T-cell (primary cell): ENCODE measurements at regions of chr6 and their contacts with region 1.

Region 1: GRCh38 chr6:27893059-27893835 is 18.9 kb downstream of the OR2B2 start:
- DNase-seq: peak; percentile 71 to 93 (median 86)
- ATAC-seq: peak; percentile 72 to 79 (median 76)
- H3K4me3 ChIP-seq: peak overlapping the region; percentile 71 to 76
- H3K4me3 Mint-ChIP-seq: no peak overlapping the region
- H3K27ac ChIP-seq: peak overlapping the region; percentile 89
- H3K27ac Mint-ChIP-seq: no peak overlapping the region
- H3K4me1 ChIP-seq: peaks cover 19 to 40% of the 10 kb centered on the region in 2 experiments
- H3K4me1 Mint-ChIP-seq: peaks cover 28 to 36% (median 29%) of the 10 kb centered on the region in 3 donors
- H3K27me3 ChIP-seq: no peaks in the 10 kb centered on the region
- H3K27me3 Mint-ChIP-seq: no peaks in the 10 kb centered on the region

Region 2: GRCh38 chr6:26553635-26554446 is 1339.4 kb before region 1 on chr6:
- CTCF ChIA-PET with region 1: no interaction called
- POLR2A ChIA-PET with region 1: interaction called in 1 of 2 experiments, 13 read pairs
- DNase-seq: peak in 34 of 35 experiments; percentile 32 to 89 (median 62)
- ATAC-seq: peak; percentile 32 to 56 (median 50)
- H3K4me3 ChIP-seq: peak overlapping the region; percentile 62 to 79
- H3K4me3 Mint-ChIP-seq: no peak overlapping the region
- H3K27ac ChIP-seq: peak overlapping the region; percentile 47
- H3K27ac Mint-ChIP-seq: no peak overlapping the region
- H3K4me1 ChIP-seq: peaks cover 23 to 27% of the 10 kb centered on the region in 2 experiments
- H3K4me1 Mint-ChIP-seq: peaks cover 18 to 24% (median 22%) of the 10 kb centered on the region in 3 donors
- H3K27me3 ChIP-seq: no peaks in the 10 kb centered on the region
- H3K27me3 Mint-ChIP-seq: peaks cover 0 to 1% of the 10 kb centered on the region in 2 donors

Region 3: DNA sequence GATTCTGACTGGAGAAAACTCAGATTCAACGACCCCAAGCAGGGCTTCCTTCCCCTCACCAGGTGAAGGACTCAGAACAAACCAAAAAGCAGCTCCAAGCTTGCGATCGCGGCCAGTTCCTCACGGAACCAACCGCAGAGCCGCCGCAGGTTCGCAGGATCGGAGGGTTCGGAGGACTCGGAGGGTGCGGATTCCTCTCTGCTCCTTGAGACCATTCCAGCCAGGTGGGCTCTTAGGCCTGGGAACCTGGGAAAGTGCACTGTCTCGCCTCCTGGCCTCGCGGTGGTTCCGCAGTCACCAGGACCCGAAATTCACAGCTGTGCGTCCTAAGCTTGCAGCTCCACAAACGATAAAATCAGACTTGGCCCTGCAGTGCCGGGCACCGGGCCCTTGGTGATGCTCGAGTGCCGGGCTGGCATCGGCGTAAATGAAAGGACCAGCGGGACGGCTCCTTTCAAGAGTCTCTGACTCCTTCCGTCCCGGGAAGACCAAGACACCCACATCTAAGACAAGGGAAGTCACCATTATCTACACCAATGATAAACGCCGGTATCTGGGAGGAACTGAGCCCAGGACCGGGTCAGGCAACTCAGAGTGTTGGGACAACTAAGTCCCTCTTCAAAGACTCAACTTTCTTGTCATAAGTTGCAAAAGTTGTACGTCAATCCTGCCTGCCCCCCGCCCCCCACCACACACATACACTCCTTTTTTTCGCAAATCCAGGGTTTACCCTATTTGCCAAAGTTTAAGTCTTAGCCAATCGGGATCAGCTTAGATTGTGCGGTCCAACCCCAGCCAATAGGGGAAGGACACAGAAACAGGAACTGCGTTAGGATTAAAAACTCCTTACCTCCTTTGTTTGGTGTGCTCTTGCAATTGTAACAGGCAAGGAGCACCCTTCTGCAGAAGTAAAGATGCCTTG is 715.5 kb before region 1 on chr6:
- CTCF ChIA-PET with region 1: interaction called, 3 to 8 read pairs
- POLR2A ChIA-PET with region 1: interaction called in 1 of 2 experiments, 12 read pairs
- DNase-seq: peak; percentile 35 to 83 (median 58)
- ATAC-seq: peak; percentile 68 to 88 (median 76)
- H3K4me3 ChIP-seq: peak overlapping the region; percentile 77 to 100
- H3K4me3 Mint-ChIP-seq: peak overlapping the region; percentile 92 to 96 (median 96)
- H3K27ac ChIP-seq: peak overlapping the region; percentile 55
- H3K27ac Mint-ChIP-seq: peak overlapping the region; percentile 88 to 91
- H3K4me1 ChIP-seq: peaks cover 2 to 16% of the 10 kb centered on the region in 2 experiments
- H3K4me1 Mint-ChIP-seq: peaks cover 7 to 22% (median 15%) of the 10 kb centered on the region in 3 donors
- H3K27me3 ChIP-seq: peaks cover 0 to 3% of the 10 kb centered on the region in 2 experiments
- H3K27me3 Mint-ChIP-seq: peaks cover 4 to 5% of the 10 kb centered on the region in 2 donors

Region 4: DNA sequence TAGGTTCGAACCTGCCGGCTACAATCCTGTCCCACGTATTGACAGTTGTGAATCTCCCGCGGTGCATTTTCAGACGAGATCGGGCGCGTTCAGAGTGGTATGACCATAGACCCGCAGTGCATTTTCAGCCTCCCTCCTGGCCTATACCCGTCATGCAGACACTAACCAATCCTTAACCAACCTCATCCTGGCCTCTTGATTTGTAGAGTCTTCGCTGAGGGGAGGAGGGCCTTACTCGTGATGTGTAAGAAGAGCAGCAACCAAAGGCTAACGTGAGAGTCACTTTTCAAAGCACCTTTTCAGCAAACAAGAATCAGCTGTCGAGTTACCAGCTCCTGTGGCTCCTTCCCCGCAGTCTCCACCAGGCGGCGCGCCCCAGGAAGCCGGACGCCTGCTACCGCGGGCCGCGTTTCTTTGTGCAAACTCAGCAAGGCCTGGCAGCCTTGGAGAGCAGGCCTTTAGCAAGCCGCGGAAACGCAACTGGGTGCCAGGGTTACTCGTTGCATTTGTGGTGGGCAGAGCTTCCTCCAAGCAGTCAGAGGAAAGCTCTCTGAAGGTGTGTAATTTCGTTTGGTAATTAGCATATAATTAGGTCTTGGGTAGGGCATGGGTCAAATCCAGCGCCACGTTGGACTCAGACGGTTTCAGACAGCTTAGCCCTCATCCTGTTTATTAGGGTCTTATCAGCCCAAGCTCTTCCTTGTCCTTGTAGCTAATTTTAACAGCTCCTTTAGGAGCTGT is 120.8 kb before region 1 on chr6:
- CTCF ChIA-PET with region 1: interaction called, 15 to 93 read pairs
- POLR2A ChIA-PET with region 1: interaction called, 5 to 8 read pairs
- DNase-seq: peak; percentile 74 to 90 (median 84)
- ATAC-seq: peak; percentile 98 to 99 (median 98)
- H3K4me3 ChIP-seq: no peak overlapping the region
- H3K4me3 Mint-ChIP-seq: peak overlapping the region in 2 of 3 donors; percentile 7 to 30
- H3K27ac ChIP-seq: no peak overlapping the region
- H3K27ac Mint-ChIP-seq: no peak overlapping the region
- H3K4me1 ChIP-seq: peaks cover 0 to 12% of the 10 kb centered on the region in 2 experiments
- H3K4me1 Mint-ChIP-seq: peaks cover 8% of the 10 kb centered on the region in 3 donors
- H3K27me3 ChIP-seq: peaks cover 0 to 5% of the 10 kb centered on the region in 2 experiments
- H3K27me3 Mint-ChIP-seq: peaks cover 11 to 20% of the 10 kb centered on the region in 2 donors

Region 5: GRCh38 chr6:27825025-27825793 is 68.0 kb before region 1 on chr6:
- CTCF ChIA-PET with region 1: interaction called, 4 to 29 read pairs
- POLR2A ChIA-PET with region 1: interaction called, 6 to 55 read pairs
- DNase-seq: peak in 1 of 35 experiments; percentile 39
- ATAC-seq: no peak
- H3K4me3 ChIP-seq: peak overlapping the region; percentile 61 to 92
- H3K4me3 Mint-ChIP-seq: peak overlapping the region; percentile 80 to 90 (median 87)
- H3K27ac ChIP-seq: peak overlapping the region; percentile 89
- H3K27ac Mint-ChIP-seq: peak overlapping the region; percentile 89 to 96
- H3K4me1 ChIP-seq: peaks cover 6 to 12% of the 10 kb centered on the region in 2 experiments
- H3K4me1 Mint-ChIP-seq: peaks cover 36 to 39% (median 38%) of the 10 kb centered on the region in 3 donors
- H3K27me3 ChIP-seq: no peaks in the 10 kb centered on the region
- H3K27me3 Mint-ChIP-seq: no peaks in the 10 kb centered on the region

Region 6: DNA sequence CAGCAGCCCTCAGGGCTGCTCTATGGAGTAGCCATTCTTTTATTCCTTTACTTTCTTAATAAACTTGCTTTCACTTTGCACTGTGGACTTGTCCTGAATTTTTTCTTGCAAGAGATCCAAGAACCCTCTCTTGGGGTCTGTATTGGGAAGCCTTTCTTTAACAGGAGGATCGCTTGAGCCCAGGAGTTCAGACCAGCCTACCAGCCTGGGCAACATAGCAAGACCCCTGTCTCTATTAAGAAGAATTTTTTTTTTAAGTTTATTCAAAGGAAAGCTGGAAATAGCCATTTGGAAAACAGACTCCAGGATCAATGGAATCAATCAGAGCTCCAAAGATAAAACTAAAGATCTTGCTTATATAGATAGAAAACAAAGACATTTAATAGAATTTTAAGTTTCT is 10.1 kb before region 1 on chr6:
- CTCF ChIA-PET with region 1: interaction called in 1 of 2 experiments, 4 read pairs
- POLR2A ChIA-PET with region 1: interaction called in 1 of 2 experiments, 11 read pairs
- DNase-seq: no peak
- ATAC-seq: no peak
- H3K4me3 ChIP-seq: no peak overlapping the region
- H3K4me3 Mint-ChIP-seq: no peak overlapping the region
- H3K27ac ChIP-seq: no peak overlapping the region
- H3K27ac Mint-ChIP-seq: no peak overlapping the region
- H3K4me1 ChIP-seq: no peaks in the 10 kb centered on the region
- H3K4me1 Mint-ChIP-seq: no peaks in the 10 kb centered on the region
- H3K27me3 ChIP-seq: no peaks in the 10 kb centered on the region
- H3K27me3 Mint-ChIP-seq: no peaks in the 10 kb centered on the region

Region 7: GRCh38 chr6:27924179-27924578 is 30.9 kb after region 1 on chr6:
- CTCF ChIA-PET with region 1: no interaction called
- POLR2A ChIA-PET with region 1: no interaction called
- DNase-seq: no peak
- ATAC-seq: no peak
- H3K4me3 ChIP-seq: no peak overlapping the region
- H3K4me3 Mint-ChIP-seq: no peak overlapping the region
- H3K27ac ChIP-seq: no peak overlapping the region
- H3K27ac Mint-ChIP-seq: no peak overlapping the region
- H3K4me1 ChIP-seq: no peaks in the 10 kb centered on the region
- H3K4me1 Mint-ChIP-seq: no peaks in the 10 kb centered on the region
- H3K27me3 ChIP-seq: peaks cover 0 to 16% of the 10 kb centered on the region in 2 experiments
- H3K27me3 Mint-ChIP-seq: peaks cover 24 to 38% of the 10 kb centered on the region in 2 donors